Mammary epithelial cell (primary cell): ENCODE measurements at regions of chr11 and their contacts with region 1.

Region 1: GRCh38 chr11:109845437-109845836 is 247.8 kb upstream of the ZC3H12C start:
- DNase-seq: no peak
- H3K4me3 ChIP-seq: no peak overlapping the region
- H3K27ac ChIP-seq: no peak overlapping the region
- H3K4me1 ChIP-seq: no peaks in the 10 kb centered on the region
- H3K27me3 ChIP-seq: no peaks in the 10 kb centered on the region
- CTCF ChIP-seq: no peak

Region 2: DNA sequence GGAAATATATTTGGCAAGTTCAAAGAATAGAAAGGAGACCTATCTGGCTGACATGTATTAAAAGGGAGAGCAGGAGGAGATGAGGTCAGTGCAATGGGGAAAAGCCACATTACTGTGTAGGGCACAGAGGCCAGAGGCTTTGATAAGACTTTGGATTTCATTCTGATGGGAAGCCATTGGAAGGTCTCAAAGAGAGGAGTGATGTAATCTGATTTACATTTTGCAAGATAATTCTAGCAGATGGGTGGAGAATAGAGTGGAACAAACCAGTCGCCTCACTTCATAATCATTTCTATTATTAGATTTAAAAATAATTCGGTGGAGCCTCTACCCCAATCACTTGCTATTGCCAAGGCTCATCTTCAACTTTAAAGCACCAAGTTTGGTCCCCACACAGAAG is 30.6 kb before region 1 on chr11:
- CTCF ChIA-PET with region 1: no interaction called
- dilution Hi-C with region 1: loop called (anchors 5 kb)
- in situ Hi-C with region 1: no loop called
- intact Hi-C with region 1: no loop called
- DNase-seq: no peak
- H3K4me3 ChIP-seq: no peak overlapping the region
- H3K27ac ChIP-seq: no peak overlapping the region
- H3K4me1 ChIP-seq: no peaks in the 10 kb centered on the region
- H3K27me3 ChIP-seq: no peaks in the 10 kb centered on the region
- CTCF ChIP-seq: no peak